ENCODE measurements at regions of chr9 and their contacts with region 1.

Region 1: DNA sequence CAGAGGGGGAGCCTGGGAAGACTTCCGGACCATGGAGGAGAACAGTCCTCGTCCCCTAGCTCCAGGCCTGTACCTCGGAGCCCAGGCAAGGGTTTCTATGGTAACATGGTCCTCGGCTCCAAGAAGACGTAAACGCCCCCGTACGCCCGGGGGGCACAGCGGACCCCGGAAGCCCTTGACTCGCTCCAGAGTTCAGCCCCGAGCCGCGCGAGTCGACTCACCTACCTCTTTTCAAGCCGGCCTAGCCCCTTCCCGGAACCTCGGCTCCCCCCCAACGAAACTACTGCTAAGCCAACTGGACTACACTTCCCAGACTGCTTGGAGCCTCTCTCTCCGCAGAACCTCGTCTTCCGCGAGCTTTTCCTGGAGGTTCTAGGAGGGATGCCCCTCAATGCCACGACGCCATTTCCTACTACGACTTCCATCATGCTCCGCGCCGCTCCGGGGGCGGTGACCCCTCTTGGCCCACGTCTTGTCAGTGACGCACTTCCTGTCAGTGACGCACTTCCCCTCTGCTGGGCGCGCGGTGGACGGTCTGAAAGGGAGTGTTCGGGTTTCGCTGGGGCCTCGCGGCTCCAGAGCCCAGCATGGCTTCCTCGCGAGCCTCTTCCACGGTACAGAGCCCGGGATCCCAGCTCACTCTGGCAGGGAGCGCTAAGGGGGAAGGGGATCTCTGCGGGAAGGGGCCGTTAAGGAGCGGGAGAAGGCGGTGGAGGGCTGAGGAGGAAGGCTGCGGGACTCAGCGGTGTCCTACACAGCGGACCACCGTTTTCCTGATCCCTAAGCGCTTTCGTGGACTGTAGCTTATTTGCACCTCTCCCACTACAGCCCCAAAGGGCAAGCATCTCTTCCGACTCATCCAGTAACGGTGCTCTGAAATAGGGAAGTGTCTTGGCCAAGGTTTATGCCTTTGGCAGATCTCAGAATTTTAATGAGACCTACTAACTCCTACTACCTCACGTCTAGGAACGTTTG is at the starts of genes CDC26 and PRPF4:
- DNase-seq: peak; percentile 91 to 98 (median 94)
- ATAC-seq: peak; percentile 87 to 91
- H3K4me3 Mint-ChIP-seq: no peak within 1 kb of the TSS
- H3K27ac Mint-ChIP-seq: no peak within 1 kb of the TSS
- H3K4me1 Mint-ChIP-seq: peaks cover 16 to 42% (median 26%) of the 10 kb centered on the region in 4 donors
- H3K27me3 Mint-ChIP-seq: no peaks in the 10 kb centered on the region
- polyA plus RNA-seq, gene CDC26: 148 to 193 (median 173) TPM
- polyA plus RNA-seq, gene PRPF4: 21.7 to 24.0 (median 23.0) TPM

Region 2: GRCh38 chr9:113221003-113221799 is 54.2 kb before region 1 on chr9 and contains the starts of genes FKBP15 and SLC31A1:
- POLR2A ChIA-PET with region 1: interaction called, 13 read pairs
- DNase-seq: peak; percentile 92 to 97 (median 96)
- ATAC-seq: peak; percentile 95 to 97
- H3K4me3 Mint-ChIP-seq: peak within 1 kb of the TSS; percentile 92 to 99 (median 97)
- H3K27ac Mint-ChIP-seq: peak within 1 kb of the TSS; percentile 80 to 97 (median 96)
- H3K4me1 Mint-ChIP-seq: peaks cover 16 to 53% (median 41%) of the 10 kb centered on the region in 4 donors
- H3K27me3 Mint-ChIP-seq: no peaks in the 10 kb centered on the region
- polyA plus RNA-seq, gene FKBP15: 7.2 to 14.4 (median 8.8) TPM
- polyA plus RNA-seq, gene SLC31A1: 2.0 to 4.7 (median 2.2) TPM